ENCODE measurements at regions of chr3 and their contacts with region 1.

Region 1: DNA sequence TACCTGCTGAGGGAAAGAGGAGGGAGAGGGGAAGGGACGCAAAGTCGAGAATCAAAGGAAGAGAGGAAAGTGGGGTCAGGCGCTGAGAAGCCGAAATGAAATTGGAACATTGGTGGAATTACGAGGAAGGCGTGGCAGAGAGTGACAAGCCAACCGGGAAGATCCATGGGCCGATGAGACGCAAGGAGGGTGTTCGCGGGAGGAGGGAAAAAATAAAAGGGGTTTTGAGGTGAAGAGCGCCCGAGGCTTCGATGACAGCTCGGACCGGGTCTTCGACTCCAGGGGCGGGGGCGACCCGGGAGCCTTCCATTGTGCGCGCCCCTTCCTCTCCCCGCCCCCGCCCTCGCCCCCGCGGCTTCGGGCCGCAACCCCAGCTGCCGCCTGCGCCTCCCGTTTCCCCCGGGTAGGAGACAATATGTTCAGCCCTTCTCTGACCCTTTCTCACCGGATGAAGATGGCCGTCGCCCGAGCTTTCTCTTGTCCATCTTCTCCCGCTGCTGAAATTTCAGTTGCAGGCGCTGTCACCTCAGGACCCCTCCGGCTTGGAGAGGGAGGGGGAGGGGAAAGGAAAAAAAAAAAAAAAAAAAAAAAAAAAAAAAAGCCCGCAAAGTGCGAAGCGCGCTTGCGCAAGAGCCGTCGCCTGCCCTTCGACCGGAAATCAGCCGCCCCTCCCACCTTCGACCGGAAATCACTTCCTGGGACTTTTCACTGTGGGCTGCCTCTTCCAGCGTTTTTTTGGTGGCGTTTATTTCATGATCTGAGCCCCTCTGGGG is at the start of gene SENP7:
- DNase-seq: peak; percentile 56 to 85 (median 74)
- ATAC-seq: peak; percentile 69 to 75
- H3K4me3 Mint-ChIP-seq: peak within 1 kb of the TSS; percentile 97 to 100 (median 100)
- H3K27ac Mint-ChIP-seq: peak within 1 kb of the TSS; percentile 94 to 100 (median 98)
- H3K4me1 Mint-ChIP-seq: peaks cover 25 to 60% (median 50%) of the 10 kb centered on the region in 4 donors
- H3K27me3 Mint-ChIP-seq: peaks cover 0 to 8% (median 0%) of the 10 kb centered on the region in 5 donors
- polyA plus RNA-seq, gene SENP7: 6.7 to 11.2 (median 9.3) TPM

Region 2: DNA sequence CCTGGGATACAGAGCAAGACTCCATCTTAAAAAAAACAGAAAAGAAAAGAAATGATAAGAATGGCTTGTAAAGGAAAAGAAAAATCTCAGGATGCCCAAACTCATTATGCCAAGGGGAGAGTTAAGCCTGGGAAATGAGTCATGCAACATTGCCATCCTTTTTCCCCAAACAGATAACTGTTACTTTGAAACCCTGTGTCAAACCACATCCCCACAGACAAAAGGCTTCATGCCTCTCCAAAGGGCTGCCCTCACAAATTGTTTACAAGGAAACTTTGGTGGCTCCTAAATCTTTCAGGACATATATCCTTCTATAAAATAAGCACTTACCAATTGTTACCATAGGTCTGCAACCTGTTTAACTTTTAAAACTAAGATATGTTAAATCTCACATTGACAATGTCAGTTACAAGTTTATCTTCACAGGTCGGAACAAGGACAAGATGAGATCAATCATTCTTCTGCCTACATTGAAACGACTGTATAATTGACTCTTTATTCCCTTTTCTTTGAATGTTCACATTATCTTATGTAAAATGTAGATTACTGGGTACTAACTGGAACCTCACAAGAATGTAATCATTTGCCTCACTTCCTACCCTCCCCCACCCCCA is 18.7 kb after region 1 on chr3:
- POLR2A ChIA-PET with region 1: interaction called, 14 read pairs
- DNase-seq: peak in 1 of 10 donors; percentile 23
- ATAC-seq: peak; percentile 39 to 76
- H3K4me3 Mint-ChIP-seq: peak overlapping the region in 9 of 10 donors; percentile 1 to 64 (median 49)
- H3K27ac Mint-ChIP-seq: peak overlapping the region; percentile 14 to 93 (median 84)
- H3K4me1 Mint-ChIP-seq: peaks cover 26 to 42% (median 34%) of the 10 kb centered on the region in 4 donors
- H3K27me3 Mint-ChIP-seq: no peaks in the 10 kb centered on the region

Region 3: GRCh38 chr3:101561630-101562328 is 48.9 kb after region 1 on chr3 and contains the start of gene TRMT10C:
- POLR2A ChIA-PET with region 1: interaction called, 15 read pairs
- DNase-seq: peak; percentile 81 to 95 (median 92)
- ATAC-seq: peak; percentile 95 to 96
- H3K4me3 Mint-ChIP-seq: peak within 1 kb of the TSS; percentile 92 to 100 (median 98)
- H3K27ac Mint-ChIP-seq: peak within 1 kb of the TSS; percentile 95 to 99 (median 98)
- H3K4me1 Mint-ChIP-seq: peaks cover 21 to 39% (median 30%) of the 10 kb centered on the region in 4 donors
- H3K27me3 Mint-ChIP-seq: peaks cover 0 to 5% (median under 1%) of the 10 kb centered on the region in 5 donors
- polyA plus RNA-seq, gene TRMT10C: 34.1 to 52.7 (median 36.7) TPM

Region 4: GRCh38 chr3:102069211-102069662 is 556.4 kb after region 1 on chr3:
- POLR2A ChIA-PET with region 1: no interaction called
- DNase-seq: no peak
- ATAC-seq: no peak
- H3K4me3 Mint-ChIP-seq: no peak overlapping the region
- H3K27ac Mint-ChIP-seq: peak overlapping the region in 1 of 10 donors; percentile 27
- H3K4me1 Mint-ChIP-seq: peaks cover 0 to 7% (median 2%) of the 10 kb centered on the region in 4 donors
- H3K27me3 Mint-ChIP-seq: no peaks in the 10 kb centered on the region

Measured in naive thymus-derived CD8-positive, alpha-beta T cell (primary cell).